ENCODE measurements at regions of chr12 and their contacts with region 1.

Region 1: GRCh38 chr12:41531147-41531829 is 343.2 kb downstream of the PDZRN4 start:
- DNase-seq: no peak
- H3K4me3 ChIP-seq: no peak overlapping the region
- H3K27ac ChIP-seq: no peak overlapping the region
- H3K4me1 ChIP-seq: peaks cover 3% of the 10 kb centered on the region
- H3K27me3 ChIP-seq: no peaks in the 10 kb centered on the region
- CTCF ChIP-seq: no peak

Region 2: DNA sequence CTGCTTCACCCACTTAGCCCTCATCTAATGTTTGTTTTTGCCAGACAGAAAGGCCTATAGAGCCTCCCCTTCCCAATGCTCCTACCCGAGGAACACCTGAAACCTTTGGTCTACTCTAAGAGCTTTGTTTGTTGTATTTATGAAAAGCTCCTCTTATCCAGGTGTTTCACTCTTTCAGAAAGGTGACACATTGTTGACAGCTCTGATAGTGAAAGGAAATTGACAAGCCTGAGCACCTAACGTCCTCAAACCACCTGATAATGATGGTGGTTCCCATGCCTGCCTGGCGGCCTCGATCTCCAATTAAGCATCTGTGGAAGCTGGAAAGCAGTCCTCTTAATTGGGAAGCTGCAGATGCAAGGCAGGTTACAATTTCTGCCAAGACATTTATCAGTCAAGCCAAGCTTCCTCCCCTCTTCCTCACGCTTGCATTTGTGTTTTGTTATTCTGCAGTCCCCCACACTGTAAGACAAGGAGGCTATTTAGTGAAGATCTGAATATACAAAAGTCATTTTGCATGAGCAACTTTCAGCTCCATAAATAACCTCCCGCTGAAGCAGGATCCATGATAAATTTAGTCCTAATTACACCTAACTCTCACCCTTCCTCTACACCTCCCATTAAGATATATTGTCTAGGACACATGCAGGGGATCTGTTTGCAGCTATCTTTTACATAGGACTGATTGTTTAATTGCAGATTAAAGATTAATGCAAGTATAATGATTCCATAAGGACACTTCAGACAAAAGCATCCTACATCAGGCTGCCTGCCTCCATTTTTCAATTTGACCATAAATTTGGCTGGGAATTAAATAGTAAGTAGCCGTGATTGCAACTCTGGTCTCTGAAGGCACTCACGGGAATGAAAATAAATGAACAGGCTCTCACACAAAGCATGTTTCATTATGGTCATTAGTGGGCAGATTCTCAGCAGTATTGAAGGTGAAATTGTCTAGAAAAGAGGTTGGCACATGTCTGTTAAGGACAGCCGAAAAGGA is 54.5 kb before region 1 on chr12:
- CTCF ChIA-PET with region 1: no interaction called
- POLR2A ChIA-PET with region 1: no interaction called
- intact Hi-C with region 1: loop called (anchors 10 kb)
- DNase-seq: no peak
- H3K4me3 ChIP-seq: no peak overlapping the region
- H3K27ac ChIP-seq: no peak overlapping the region
- H3K4me1 ChIP-seq: peaks cover 7% of the 10 kb centered on the region
- H3K27me3 ChIP-seq: no peaks in the 10 kb centered on the region
- CTCF ChIP-seq: no peak

Region 3: DNA sequence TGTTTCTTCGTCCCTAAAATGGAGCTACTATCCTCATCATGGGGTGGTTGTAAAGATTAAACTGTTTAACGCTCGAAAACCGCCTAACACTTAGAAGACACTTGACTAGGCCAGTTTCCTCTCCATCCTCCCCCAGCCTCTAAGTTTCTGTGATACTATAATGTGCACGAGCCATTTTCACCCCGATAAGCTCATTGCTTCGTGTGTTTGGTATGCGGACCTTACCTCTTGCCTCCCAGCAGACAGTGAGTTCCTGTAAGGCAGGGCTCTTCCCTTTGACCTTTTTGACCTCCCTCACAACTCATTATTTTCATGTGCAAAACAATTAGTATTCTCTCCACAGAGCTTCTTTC is 613.9 kb after region 1 on chr12:
- CTCF ChIA-PET with region 1: no interaction called
- POLR2A ChIA-PET with region 1: no interaction called
- intact Hi-C with region 1: no loop called
- DNase-seq: no peak
- H3K4me3 ChIP-seq: peak overlapping the region; percentile 83
- H3K27ac ChIP-seq: peak overlapping the region; percentile 71
- H3K4me1 ChIP-seq: peaks cover 21% of the 10 kb centered on the region
- H3K27me3 ChIP-seq: no peaks in the 10 kb centered on the region
- CTCF ChIP-seq: no peak

Measured in A673 (cell line).